Natural killer cell (primary cell): ENCODE measurements at regions of chr15 and their contacts with region 1.

Region 1: GRCh38 chr15:65304389-65305144 is at the start of gene RNU5B-1:
- DNase-seq: peak; percentile 61 to 93
- ATAC-seq: peak; percentile 76 to 92 (median 85)
- H3K4me3 ChIP-seq: peak within 1 kb of the TSS; percentile 51
- H3K4me3 Mint-ChIP-seq: peak within 1 kb of the TSS; percentile 100
- H3K27ac ChIP-seq: peak within 1 kb of the TSS; percentile 95
- H3K27ac Mint-ChIP-seq: peak within 1 kb of the TSS; percentile 95 to 100
- H3K4me1 ChIP-seq: peaks cover 24% of the 10 kb centered on the region
- H3K4me1 Mint-ChIP-seq: peaks cover 19 to 31% of the 10 kb centered on the region in 2 donors
- H3K27me3 ChIP-seq: no peaks in the 10 kb centered on the region
- H3K27me3 Mint-ChIP-seq: no peaks in the 10 kb centered on the region
- CTCF ChIP-seq: no peak
- total RNA-seq, gene RNU5B-1: 15.0 TPM in 1 of 3 donors, not detected in the others

Region 2: DNA sequence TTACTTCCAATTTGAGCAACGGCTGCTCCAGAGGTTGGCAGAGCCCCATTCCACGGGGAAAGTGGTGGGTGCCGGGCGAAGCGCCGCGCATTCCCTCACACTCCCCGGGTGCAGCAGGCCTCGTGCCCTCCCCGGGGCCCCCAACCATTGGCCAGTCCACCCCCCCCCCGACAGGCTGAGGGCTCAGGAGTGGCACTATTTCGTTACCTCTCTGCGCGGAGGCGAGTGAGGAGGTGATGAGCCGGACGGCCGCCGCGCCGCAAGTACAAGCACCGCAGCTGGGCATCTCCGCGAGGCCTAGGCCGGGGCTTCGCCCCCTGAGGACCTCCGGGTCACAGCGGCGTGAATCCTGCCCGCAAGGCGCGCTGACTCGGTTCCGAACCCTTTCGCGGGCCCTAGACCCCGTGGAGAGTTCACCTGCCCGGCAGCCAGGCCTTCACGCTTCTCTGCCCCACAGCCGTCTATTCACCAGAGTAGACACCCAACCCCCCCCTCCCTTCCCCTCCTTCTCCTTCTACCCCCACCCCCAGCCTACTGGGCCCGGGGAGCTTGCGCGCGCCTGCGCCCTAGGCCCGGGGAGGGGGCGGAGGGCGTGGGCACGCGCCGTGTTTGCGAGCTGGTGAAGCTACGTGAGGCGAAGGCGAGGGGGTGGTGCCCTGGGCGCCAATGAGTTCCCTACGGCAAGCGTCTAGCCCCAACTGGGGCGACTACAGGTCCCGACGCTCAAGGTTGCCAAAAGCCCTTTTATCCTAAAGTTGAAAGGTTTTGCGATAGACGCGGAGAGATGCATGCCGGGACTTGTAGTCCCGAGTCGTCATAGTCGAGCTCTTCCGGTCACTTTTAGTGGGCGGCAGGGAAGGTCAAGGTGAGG is 119.5 kb before region 1 on chr15 and contains the start of gene CLPX:
- intact Hi-C with region 1: loop called (anchors 1 kb)
- DNase-seq: peak; percentile 80 to 97
- ATAC-seq: peak; percentile 88 to 96 (median 91)
- H3K4me3 ChIP-seq: peak within 1 kb of the TSS; percentile 68
- H3K4me3 Mint-ChIP-seq: peak within 1 kb of the TSS; percentile 93
- H3K27ac ChIP-seq: peak within 1 kb of the TSS; percentile 76
- H3K27ac Mint-ChIP-seq: peak within 1 kb of the TSS; percentile 91 to 92
- H3K4me1 ChIP-seq: peaks cover 24% of the 10 kb centered on the region
- H3K4me1 Mint-ChIP-seq: peaks cover 26 to 31% of the 10 kb centered on the region in 2 donors
- H3K27me3 ChIP-seq: no peaks in the 10 kb centered on the region
- H3K27me3 Mint-ChIP-seq: no peaks in the 10 kb centered on the region
- CTCF ChIP-seq: no peak
- total RNA-seq, gene CLPX: 35.4 to 39.9 (median 38.2) TPM

Region 3: DNA sequence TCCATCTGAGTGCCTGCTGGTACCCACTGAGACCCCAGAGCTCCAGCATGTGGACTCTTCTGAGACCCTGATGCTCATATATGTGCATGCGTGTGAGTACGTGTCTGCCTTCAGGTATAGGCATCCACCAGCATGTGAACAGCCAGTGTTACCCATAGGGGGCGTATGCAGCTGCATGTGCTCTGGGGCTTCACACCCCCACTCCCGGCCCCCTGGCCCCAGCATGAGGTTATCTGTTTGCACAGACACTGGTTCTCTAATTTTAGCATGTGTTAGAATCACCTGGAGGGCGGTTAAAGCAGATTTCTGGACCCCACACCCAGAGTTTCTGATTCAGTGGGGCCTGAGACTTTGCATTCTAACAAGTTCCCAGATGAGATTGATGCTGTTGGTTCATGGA is 92.5 kb before region 1 on chr15:
- intact Hi-C with region 1: no loop called
- DNase-seq: peak in 1 of 2 donors; percentile 59
- ATAC-seq: peak; percentile 41 to 59 (median 54)
- H3K4me3 ChIP-seq: no peak overlapping the region
- H3K4me3 Mint-ChIP-seq: no peak overlapping the region
- H3K27ac ChIP-seq: no peak overlapping the region
- H3K27ac Mint-ChIP-seq: no peak overlapping the region
- H3K4me1 ChIP-seq: no peaks in the 10 kb centered on the region
- H3K4me1 Mint-ChIP-seq: no peaks in the 10 kb centered on the region
- H3K27me3 ChIP-seq: no peaks in the 10 kb centered on the region
- H3K27me3 Mint-ChIP-seq: no peaks in the 10 kb centered on the region
- CTCF ChIP-seq: peak; percentile 25

Region 4: DNA sequence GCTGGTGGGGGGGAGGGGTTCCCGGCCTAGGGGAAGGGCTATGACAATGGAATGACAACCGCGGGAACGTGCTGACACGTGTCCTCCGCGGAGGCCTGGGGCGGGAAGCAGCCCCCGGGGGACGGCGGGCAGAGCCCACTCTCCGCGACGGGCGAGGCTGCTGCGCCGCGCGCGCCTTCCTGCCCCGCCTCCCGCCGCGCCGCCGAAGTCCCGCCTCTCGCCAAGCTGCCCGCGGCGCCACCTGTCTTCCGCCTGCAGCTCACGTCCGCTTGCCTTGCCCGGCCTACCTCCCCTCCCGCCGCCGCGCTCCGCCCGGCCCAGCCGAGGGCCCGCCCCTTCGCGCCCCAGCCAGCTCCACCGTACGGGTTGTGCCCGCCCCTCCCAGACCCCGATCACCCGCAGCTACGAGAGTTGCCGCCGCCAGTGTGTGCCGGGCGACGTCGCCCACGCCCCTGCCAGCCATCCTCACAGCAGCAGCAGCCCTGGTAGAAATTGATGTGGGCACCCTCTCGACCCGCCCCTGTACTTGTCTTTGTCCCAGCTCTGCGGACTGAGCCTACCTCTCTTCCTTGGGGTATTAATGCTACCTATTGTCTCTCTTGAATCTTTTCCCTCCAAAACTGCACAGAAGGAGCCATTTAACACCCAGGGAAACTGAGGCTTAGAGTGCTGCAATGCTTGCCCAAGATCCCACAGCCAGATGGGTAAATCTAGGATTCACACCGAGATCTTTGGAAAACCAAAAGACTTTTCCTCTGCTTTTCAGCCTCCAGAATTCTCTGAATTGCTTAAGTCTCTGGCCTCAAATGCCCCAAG is 17.7 kb before region 1 on chr15 and contains the start of gene PARP16:
- intact Hi-C with region 1: loop called (anchors 1 kb)
- DNase-seq: peak; percentile 90 to 95
- ATAC-seq: peak; percentile 95 to 98 (median 95)
- H3K4me3 ChIP-seq: peak within 1 kb of the TSS; percentile 86
- H3K4me3 Mint-ChIP-seq: peak within 1 kb of the TSS; percentile 92
- H3K27ac ChIP-seq: peak within 1 kb of the TSS; percentile 85
- H3K27ac Mint-ChIP-seq: peak within 1 kb of the TSS; percentile 88 to 91
- H3K4me1 ChIP-seq: peaks cover 20% of the 10 kb centered on the region
- H3K4me1 Mint-ChIP-seq: peaks cover 35% of the 10 kb centered on the region in 2 donors
- H3K27me3 ChIP-seq: no peaks in the 10 kb centered on the region
- H3K27me3 Mint-ChIP-seq: no peaks in the 10 kb centered on the region
- CTCF ChIP-seq: peak; percentile 27
- total RNA-seq, gene PARP16: 11.7 to 19.3 (median 16.4) TPM

Region 5: DNA sequence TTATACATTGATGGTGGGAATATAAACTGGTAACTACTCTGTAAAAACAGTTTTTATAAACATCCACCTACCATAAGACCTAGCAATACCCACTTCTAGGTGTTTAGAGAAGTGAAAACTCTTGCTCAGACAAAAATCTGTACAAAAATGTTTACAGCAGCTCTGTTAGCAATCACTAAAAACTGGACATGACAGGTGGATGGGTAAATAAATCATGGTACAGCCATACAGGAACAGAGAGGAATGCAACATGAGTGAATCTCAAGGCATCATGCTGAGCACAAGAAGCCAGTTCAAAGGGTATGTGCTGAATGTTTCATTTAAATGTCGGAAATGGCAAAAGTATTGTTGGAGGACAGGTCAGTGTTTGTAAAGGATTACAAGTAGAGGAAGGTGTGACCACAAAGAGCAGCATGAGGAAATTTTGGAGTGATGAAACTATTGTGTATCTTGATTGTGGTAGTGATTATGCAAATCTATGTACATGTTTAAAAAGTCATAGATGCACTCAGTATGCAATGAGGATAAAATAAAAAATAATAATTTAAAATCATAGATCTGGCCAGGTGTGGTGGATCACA is 11.5 kb before region 1 on chr15:
- intact Hi-C with region 1: loop called (anchors 1 kb)
- DNase-seq: no peak
- ATAC-seq: no peak
- H3K4me3 ChIP-seq: no peak overlapping the region
- H3K4me3 Mint-ChIP-seq: no peak overlapping the region
- H3K27ac ChIP-seq: no peak overlapping the region
- H3K27ac Mint-ChIP-seq: peak overlapping the region in 1 of 2 donors; percentile 49
- H3K4me1 ChIP-seq: peaks cover 23% of the 10 kb centered on the region
- H3K4me1 Mint-ChIP-seq: peaks cover 11 to 23% of the 10 kb centered on the region in 2 donors
- H3K27me3 ChIP-seq: no peaks in the 10 kb centered on the region
- H3K27me3 Mint-ChIP-seq: no peaks in the 10 kb centered on the region
- CTCF ChIP-seq: no peak